ENCODE measurements at regions of chr7 and their contacts with region 1.

Region 1: DNA sequence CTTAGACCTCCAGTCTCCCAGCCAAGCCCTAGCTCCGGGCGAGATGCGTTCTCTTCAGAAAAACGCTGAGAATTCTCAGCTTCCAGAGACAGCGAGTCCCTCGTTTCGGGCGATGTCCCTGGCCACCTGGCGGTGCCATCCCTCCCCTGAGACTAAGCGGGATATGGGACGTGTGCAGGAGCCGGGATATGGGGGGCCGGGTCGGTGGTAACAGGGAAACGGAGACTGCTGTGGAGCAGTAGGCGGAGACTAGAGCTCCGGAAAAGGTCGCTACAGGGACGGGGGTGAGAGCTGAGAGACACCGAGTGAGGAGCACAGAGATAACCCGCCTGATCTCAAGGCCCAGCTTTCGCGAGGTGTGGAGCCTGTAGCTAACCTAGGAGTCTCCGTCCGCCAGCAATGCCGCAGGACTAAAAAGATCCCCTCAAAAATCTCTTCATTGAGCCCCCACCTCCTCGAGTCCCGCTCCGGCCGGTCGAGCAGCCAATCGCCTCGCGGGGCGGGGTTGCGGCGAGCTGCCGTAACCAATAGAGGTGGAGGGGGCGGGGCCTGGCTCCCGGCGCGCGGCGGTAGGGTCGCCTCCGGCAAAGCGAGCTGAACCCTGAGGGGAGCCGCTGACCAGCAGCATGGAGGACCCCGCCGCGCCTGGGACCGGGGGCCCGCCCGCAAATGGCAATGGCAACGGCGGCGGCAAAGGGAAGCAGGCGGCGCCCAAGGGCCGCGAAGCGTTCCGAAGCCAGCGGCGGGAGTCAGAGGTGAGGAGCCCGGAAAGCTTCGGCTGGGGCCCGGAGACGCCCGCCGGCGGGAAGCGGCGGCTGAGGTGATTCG is at the start of gene STRIP2:
- DNase-seq: peak; percentile 96
- ATAC-seq: peak; percentile 80
- H3K4me3 Mint-ChIP-seq: peak within 1 kb of the TSS; percentile 90
- H3K27ac Mint-ChIP-seq: peak within 1 kb of the TSS; percentile 91
- H3K4me1 Mint-ChIP-seq: peaks cover 33% of the 10 kb centered on the region
- H3K27me3 Mint-ChIP-seq: peaks cover 7% of the 10 kb centered on the region
- total RNA-seq, gene STRIP2: 41.3 to 51.8 TPM

Region 2: DNA sequence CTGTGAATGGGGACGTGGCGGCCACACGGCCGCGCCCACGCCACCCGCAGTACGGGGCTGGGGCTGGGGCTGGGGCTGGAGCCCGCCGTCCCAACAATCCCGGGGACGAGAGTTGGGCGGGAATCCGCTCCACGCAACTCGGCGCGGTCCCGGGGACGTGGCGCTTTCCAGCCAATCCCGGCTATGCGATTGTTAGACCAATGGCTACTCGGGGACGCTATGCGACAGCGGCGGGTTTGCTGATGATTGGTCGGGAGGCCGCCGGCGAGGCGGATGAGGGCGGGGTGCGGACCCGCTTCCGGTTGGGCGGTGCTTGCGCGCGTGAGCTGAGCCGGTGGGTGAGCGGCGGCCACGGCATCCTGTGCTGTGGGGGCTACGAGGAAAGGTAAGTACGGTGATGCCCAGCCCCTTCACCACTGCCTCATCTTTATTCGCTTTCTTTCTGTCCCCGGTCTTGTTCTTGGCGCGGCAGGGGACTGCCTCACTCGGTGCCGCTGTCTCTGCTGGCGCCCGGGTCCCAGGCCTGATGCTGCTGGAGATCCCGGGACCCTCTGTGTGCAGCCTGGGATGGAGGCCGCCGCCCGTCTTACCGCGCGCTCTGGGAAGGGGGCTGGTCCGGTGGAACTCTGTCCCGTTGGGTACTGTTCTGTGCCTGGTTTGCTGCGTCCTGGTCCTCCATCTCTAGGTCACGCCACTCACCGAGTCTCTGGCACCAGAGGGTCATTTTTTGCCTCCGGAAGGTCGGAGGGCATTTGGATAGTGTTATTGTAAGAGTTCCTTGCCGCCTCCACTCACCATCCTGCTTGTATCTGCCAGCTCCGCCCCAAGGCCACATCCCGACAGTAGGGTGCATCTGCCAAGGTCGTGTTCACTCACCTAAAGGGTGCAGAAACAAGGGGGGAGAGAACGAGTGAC is 694.8 kb before region 1 on chr7 and contains the start of gene CALU:
- CTCF ChIA-PET with region 1: no interaction called
- POLR2A ChIA-PET with region 1: no interaction called
- intact Hi-C with region 1: loop called in 1 of 2 experiments (anchors 10 kb)
- DNase-seq: peak; percentile 97
- ATAC-seq: peak; percentile 98
- H3K4me3 Mint-ChIP-seq: peak within 1 kb of the TSS; percentile 99
- H3K27ac Mint-ChIP-seq: peak within 1 kb of the TSS; percentile 93
- H3K4me1 Mint-ChIP-seq: peaks cover 38% of the 10 kb centered on the region
- H3K27me3 Mint-ChIP-seq: peaks cover 3% of the 10 kb centered on the region
- total RNA-seq, gene CALU: 32.9 to 33.8 TPM

Region 3: GRCh38 chr7:129343099-129343700 is 90.9 kb before region 1 on chr7:
- CTCF ChIA-PET with region 1: interaction called, 5 read pairs
- POLR2A ChIA-PET with region 1: interaction called, 3 read pairs
- intact Hi-C with region 1: loop called in 1 of 2 experiments (anchors 1 kb)
- DNase-seq: peak; percentile 9
- ATAC-seq: peak; percentile 36
- H3K4me3 Mint-ChIP-seq: no peak overlapping the region
- H3K27ac Mint-ChIP-seq: no peak overlapping the region
- H3K4me1 Mint-ChIP-seq: peaks cover 29% of the 10 kb centered on the region
- H3K27me3 Mint-ChIP-seq: no peaks in the 10 kb centered on the region

Region 4: GRCh38 chr7:129454249-129454551 is 20.1 kb after region 1 on chr7:
- CTCF ChIA-PET with region 1: interaction called, 10 read pairs
- POLR2A ChIA-PET with region 1: no interaction called
- intact Hi-C with region 1: no loop called
- DNase-seq: no peak
- ATAC-seq: no peak
- H3K4me3 Mint-ChIP-seq: no peak overlapping the region
- H3K27ac Mint-ChIP-seq: no peak overlapping the region
- H3K4me1 Mint-ChIP-seq: no peaks in the 10 kb centered on the region
- H3K27me3 Mint-ChIP-seq: no peaks in the 10 kb centered on the region

Region 5: DNA sequence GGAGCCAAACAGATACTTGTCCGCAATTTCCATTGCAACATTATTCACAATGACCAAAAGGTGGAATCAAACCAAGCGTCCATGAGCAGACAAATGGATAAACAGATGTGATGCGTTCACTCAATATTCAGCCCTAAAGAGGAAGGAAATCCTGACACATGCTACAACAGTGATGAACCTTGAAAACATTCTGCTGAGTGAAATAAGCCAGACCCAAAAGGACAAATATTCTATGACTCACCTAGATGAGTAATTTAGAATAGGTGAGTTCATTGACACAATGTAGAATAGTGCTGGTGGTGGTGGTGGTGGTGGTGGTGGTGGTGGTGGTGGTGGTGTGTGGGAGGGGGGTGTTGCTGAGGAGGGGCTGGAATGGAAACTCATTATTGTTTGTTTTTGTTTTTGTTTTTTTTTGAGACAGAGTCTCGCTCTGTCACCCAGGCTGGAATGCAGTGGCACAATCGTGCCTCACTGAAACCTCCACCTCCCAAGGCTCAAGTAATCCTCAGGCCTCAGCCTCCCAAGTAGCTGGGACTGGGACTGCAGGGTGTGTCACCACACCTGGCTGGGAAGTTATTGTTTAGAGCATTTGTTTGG is 96.8 kb after region 1 on chr7:
- CTCF ChIA-PET with region 1: interaction called, 4 read pairs
- POLR2A ChIA-PET with region 1: no interaction called
- intact Hi-C with region 1: loop called (anchors 1 to 2 kb)
- DNase-seq: peak; percentile 70
- ATAC-seq: peak; percentile 96
- H3K4me3 Mint-ChIP-seq: no peak overlapping the region
- H3K27ac Mint-ChIP-seq: peak overlapping the region; percentile 13
- H3K4me1 Mint-ChIP-seq: peaks cover 11% of the 10 kb centered on the region
- H3K27me3 Mint-ChIP-seq: peaks cover 10% of the 10 kb centered on the region

Region 6: DNA sequence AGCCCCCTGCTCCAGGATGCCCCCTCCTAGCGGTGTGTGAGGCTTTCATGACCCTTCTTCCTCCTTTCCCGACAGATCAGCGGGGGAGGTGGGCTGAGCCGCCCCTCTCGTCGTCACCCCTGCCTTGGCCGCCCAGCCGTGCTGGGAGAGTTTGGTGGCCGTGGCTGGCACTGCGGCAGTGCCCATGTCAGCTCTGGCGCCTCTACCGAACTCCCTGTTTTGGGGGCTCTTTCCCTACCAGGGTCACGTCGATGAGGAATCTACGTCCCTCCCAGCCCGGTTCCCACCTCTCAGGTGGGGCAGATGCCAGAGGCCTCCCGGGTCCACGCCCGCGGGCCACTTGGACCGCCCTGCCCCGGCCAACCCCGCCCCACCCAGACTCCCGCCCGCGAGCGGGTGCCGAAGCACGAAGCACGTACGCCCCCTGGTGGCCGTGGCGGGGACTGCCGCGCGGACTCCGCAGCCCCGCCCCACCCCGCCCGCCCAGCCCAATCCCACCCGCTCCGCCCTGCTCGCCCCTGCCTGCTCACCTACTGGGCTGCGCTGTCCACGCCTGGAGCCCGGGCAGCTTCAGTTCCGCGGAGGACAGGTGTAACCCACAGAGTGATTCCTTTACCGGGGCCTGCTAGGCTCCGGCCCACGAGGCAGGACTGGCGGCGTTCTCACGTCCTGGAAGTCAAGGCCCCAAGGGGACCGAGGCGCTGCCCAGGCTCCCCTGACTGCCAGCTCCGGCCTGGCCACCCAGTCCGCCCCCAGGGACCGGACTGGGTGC is 391.6 kb after region 1 on chr7:
- CTCF ChIA-PET with region 1: interaction called, 4 read pairs
- POLR2A ChIA-PET with region 1: no interaction called
- intact Hi-C with region 1: loop called in 1 of 2 experiments (anchors 1 kb)
- DNase-seq: peak; percentile 95
- ATAC-seq: peak; percentile 75
- H3K4me3 Mint-ChIP-seq: peak overlapping the region; percentile 86
- H3K27ac Mint-ChIP-seq: peak overlapping the region; percentile 55
- H3K4me1 Mint-ChIP-seq: peaks cover 17% of the 10 kb centered on the region
- H3K27me3 Mint-ChIP-seq: no peaks in the 10 kb centered on the region

Measured in activated CD4-positive, alpha-beta T cell treated with anti-CD3 and anti-CD28 coated beads for 36 hours (primary cell).